Activated CD4-positive, alpha-beta memory T cell treated with anti-CD3 and anti-CD28 coated beads for 36 hours (primary cell): ENCODE measurements at regions of chr1 and their contacts with region 1.

Region 1: DNA sequence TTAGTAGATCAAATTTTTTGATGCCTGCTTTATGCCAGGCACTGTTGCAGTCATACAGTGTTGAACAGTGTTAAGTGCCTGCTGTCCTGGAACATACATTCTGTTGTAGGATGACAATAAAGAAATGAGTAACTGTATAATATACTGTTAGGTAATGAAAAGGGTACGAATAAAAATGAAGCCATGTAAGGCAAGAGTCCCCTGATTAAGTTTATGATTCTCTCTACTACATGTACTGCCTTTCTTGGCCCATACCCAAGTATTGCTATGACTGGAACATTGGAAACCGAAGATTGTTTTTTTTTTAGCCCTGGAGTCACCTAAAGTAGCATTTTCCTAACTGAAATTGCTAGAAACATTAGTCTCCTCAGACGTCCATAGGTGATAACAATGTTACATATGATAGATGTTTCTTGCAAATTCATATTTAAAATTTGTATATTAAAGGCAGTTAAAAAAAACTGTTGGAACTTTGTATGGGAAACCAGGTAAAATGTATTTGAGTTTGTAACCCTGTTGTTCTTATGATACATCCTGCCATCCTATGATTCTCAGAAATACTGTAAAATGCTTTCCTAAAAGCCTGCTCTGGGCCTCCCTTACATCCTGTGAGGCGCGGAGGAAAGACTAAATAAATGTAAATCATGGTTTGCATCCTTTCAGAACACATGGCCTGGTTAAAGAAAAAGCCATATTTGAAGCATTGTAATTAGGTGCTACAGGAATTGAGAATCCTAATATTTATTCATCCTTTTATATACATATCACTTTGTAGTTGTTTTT is 5.8 kb downstream of the ATP5PB start:
- DNase-seq: no peak
- H3K4me3 Mint-ChIP-seq: peak overlapping the region; percentile 41
- H3K27ac Mint-ChIP-seq: peak overlapping the region; percentile 79
- H3K4me1 Mint-ChIP-seq: peaks cover 55% of the 10 kb centered on the region
- H3K27me3 Mint-ChIP-seq: no peaks in the 10 kb centered on the region

Region 2: DNA sequence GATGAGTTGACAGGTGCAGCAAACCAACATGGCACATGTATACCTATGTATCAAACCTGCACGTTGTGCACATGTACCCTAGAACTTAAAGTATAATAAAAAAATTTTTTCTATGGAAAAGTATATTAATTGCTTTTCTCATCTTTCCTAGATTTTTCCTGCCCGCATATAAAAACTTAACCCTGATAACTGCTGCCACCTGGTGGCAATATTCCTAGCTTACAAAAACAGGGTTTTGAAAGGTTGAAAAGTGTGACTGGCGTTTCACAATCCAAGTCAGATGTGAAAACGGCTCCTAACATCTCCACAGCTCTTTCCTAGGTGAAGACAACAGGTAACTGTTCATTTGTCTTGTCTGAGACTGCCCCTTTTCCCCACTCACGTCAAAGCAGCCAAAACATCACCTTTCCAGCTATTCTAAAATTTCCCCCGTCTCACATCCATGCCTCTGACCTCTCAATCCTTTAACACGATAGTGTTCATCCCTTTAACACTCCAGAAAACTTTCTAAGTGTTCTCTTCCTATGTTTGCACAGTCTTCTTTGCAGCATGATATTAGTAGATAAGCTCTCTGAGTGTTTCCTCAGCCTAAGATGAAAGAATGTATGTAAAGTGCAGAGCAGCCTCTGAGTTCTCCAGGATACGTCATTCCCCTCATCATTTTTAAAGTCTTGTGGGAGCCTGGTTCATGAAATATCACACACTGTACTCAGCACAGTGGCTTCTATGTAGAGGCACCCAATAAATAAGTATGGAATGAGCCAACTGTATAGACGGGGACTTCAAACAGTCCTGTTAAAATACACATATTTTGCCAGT is 55.0 kb before region 1 on chr1:
- CTCF ChIA-PET with region 1: no interaction called
- POLR2A ChIA-PET with region 1: no interaction called
- intact Hi-C with region 1: no loop called
- DNase-seq: peak; percentile 40
- H3K4me3 Mint-ChIP-seq: no peak overlapping the region
- H3K27ac Mint-ChIP-seq: no peak overlapping the region
- H3K4me1 Mint-ChIP-seq: peaks cover 29% of the 10 kb centered on the region
- H3K27me3 Mint-ChIP-seq: no peaks in the 10 kb centered on the region

Region 3: GRCh38 chr1:111471012-111471411 is 16.0 kb after region 1 on chr1:
- CTCF ChIA-PET with region 1: interaction called, 5 read pairs
- POLR2A ChIA-PET with region 1: no interaction called
- intact Hi-C with region 1: loop called (anchors 1 kb)
- DNase-seq: peak; percentile 85
- H3K4me3 Mint-ChIP-seq: no peak overlapping the region
- H3K27ac Mint-ChIP-seq: no peak overlapping the region
- H3K4me1 Mint-ChIP-seq: peaks cover 31% of the 10 kb centered on the region
- H3K27me3 Mint-ChIP-seq: no peaks in the 10 kb centered on the region